Endothelial cell of umbilical vein (primary cell): ENCODE measurements at regions of chr2 and their contacts with region 1.

Region 1: DNA sequence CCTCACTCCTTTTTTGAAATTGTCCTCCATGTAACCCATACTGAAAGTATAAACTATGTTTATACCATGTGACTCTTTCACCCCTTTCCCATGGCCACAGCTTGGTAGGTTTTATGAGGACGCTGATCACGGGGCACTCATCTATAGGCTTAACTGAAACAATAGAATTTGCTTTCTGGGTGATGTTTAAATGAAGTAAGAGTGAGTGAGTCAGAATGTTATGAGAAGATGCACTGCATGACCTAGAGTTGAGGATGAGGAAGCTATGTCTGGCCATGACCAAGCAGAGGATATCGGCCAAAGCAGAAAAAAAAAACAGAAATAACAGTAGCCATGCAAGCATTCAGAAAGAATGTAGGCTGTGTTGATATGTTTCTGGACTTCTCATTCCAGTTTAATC is 34.9 kb downstream of the SCN1A start:
- DNase-seq: peak; percentile 95
- H3K4me3 ChIP-seq: no peak overlapping the region
- H3K27ac ChIP-seq: peak overlapping the region; percentile 80
- H3K4me1 ChIP-seq: peaks cover 15% of the 10 kb centered on the region
- H3K27me3 ChIP-seq: no peaks in the 10 kb centered on the region
- CTCF ChIP-seq: no peak
- POLR2A ChIP-seq: no peak

Region 2: DNA sequence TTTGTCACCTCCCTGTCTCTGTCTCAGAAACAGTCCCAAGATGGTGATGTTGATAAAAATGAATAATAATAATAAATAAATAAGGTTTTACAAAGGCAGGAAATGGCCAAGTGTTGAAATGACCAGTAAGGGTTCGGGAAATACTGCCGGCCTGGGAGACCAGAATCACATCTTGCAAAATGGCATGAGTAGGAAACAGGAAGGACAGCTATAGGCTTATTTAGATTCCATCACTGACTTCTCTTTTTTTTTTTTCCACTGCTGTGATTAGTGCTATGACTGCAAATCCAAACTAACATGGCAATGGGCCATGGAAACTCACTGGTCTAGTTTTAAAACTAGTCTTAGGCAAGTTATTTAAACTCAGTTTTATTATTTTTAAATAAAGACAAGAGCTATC is 25.7 kb before region 1 on chr2:
- CTCF ChIA-PET with region 1: interaction called, 3 read pairs
- POLR2A ChIA-PET with region 1: interaction called, 3 read pairs
- dilution Hi-C with region 1: no loop called
- intact Hi-C with region 1: loop called (anchors 2 kb)
- DNase-seq: peak; percentile 64
- H3K4me3 ChIP-seq: no peak overlapping the region
- H3K27ac ChIP-seq: no peak overlapping the region
- H3K4me1 ChIP-seq: peaks cover 13% of the 10 kb centered on the region
- H3K27me3 ChIP-seq: no peaks in the 10 kb centered on the region
- CTCF ChIP-seq: no peak
- POLR2A ChIP-seq: no peak

Region 3: DNA sequence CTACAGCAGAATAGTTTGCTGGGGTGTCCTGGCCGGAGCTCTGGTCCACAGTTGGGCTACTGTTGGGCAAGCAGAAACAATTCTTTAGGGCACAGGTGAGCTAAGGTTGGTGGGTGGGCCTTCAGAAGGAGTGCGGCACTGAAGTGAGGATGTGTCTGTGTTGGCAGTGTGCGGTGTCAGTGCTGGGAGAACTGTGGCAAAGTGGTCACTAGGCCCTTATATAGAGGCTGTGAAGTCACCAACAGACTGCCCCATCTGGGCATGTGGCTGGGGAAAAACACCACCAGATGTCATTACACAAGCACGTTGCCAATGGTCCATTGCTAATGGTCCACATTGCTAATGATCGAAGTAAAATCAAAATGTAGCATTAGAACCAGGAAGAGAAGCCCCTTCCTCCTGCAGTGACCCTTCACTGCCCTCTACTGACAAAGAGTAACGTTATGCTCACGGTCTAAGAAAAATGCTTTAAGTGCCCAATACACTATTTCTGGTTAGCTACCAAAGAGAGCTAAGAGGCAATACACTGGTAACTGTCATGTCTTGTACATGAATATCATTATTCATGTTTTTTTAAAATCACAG is 13.6 kb after region 1 on chr2:
- CTCF ChIA-PET with region 1: interaction called, 5 read pairs
- POLR2A ChIA-PET with region 1: no interaction called
- dilution Hi-C with region 1: no loop called
- intact Hi-C with region 1: loop called (anchors 2 kb)
- DNase-seq: peak; percentile 68
- H3K4me3 ChIP-seq: no peak overlapping the region
- H3K27ac ChIP-seq: no peak overlapping the region
- H3K4me1 ChIP-seq: no peaks in the 10 kb centered on the region
- H3K27me3 ChIP-seq: no peaks in the 10 kb centered on the region
- CTCF ChIP-seq: peak; percentile 47 to 63
- POLR2A ChIP-seq: no peak

Region 4: DNA sequence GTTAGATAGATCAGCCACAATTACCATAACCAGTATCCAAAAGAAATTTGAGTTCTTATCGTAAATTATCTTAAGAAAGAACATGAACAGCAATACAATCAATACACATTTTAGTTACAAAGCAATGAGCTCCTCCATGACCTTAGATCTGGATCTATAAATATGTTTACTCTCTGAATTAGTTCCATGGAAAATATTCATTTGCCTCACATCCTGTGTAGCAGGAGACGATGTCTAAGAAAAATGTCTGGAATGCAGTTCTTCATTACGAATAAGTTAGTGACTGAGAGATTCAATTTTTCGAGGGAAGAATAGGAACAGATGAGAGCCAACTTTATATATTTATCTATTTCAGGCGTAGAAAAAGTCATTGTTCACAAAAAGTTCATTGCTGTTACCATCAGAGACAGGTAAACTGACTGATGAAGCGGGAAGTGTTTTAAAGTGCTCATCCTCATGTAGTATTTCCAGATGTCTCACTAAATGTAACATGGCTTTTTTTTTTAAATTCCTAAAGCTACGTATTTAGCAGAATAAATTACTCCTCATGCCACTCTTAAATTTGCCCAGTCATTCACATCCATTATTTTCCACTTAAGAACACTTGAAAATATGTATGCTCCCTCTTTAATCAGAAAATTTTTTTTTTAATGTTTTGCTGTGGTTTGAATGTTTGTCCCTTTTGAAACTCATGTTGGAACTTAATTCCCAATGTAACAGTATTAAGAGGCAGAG is 141.4 kb after region 1 on chr2:
- CTCF ChIA-PET with region 1: no interaction called
- POLR2A ChIA-PET with region 1: no interaction called
- dilution Hi-C with region 1: no loop called
- intact Hi-C with region 1: loop called (anchors 1 kb)
- DNase-seq: peak; percentile 88
- H3K4me3 ChIP-seq: no peak overlapping the region
- H3K27ac ChIP-seq: peak overlapping the region; percentile 95
- H3K4me1 ChIP-seq: peaks cover 44% of the 10 kb centered on the region
- H3K27me3 ChIP-seq: no peaks in the 10 kb centered on the region
- CTCF ChIP-seq: no peak
- POLR2A ChIP-seq: no peak